ENCODE measurements at regions of chr3 and their contacts with region 1.

Region 1: GRCh38 chr3:10224784-10225665 is 23.2 kb upstream of the TATDN2 start:
- DNase-seq: peak; percentile 71
- ATAC-seq: peak; percentile 87
- H3K4me3 ChIP-seq: no peak overlapping the region
- H3K27ac ChIP-seq: no peak overlapping the region
- H3K4me1 ChIP-seq: peaks cover 29 to 42% of the 10 kb centered on the region in 2 experiments
- H3K27me3 ChIP-seq: no peaks in the 10 kb centered on the region
- CTCF ChIP-seq: peak; percentile 80 to 90 (median 89)
- POLR2A ChIP-seq: no peak
- RAD21 ChIP-seq: peak; percentile 98

Region 2: GRCh38 chr3:9278498-9278897 is 946.5 kb before region 1 on chr3:
- CTCF ChIA-PET with region 1: no interaction called
- POLR2A ChIA-PET with region 1: no interaction called
- RAD21 ChIA-PET with region 1: no interaction called
- intact Hi-C with region 1: no loop called
- DNase-seq: no peak
- ATAC-seq: no peak
- H3K4me3 ChIP-seq: no peak overlapping the region
- H3K27ac ChIP-seq: no peak overlapping the region
- H3K4me1 ChIP-seq: peaks cover 2 to 5% of the 10 kb centered on the region in 2 experiments; a peak in 3 of 4 replicates
- H3K27me3 ChIP-seq: no peaks in the 10 kb centered on the region
- CTCF ChIP-seq: no peak
- POLR2A ChIP-seq: no peak
- RAD21 ChIP-seq: no peak

Region 3: GRCh38 chr3:9715764-9716437 is 509.1 kb before region 1 on chr3:
- CTCF ChIA-PET with region 1: no interaction called
- POLR2A ChIA-PET with region 1: no interaction called
- RAD21 ChIA-PET with region 1: no interaction called
- intact Hi-C with region 1: loop called (anchors 5 kb)
- DNase-seq: peak; percentile 81
- ATAC-seq: peak; percentile 98
- H3K4me3 ChIP-seq: no peak overlapping the region
- H3K27ac ChIP-seq: peak overlapping the region; percentile 9; the same call in 1 of the 2 replicates
- H3K4me1 ChIP-seq: peaks cover 10 to 14% of the 10 kb centered on the region in 2 experiments
- H3K27me3 ChIP-seq: peaks cover 3% of the 10 kb centered on the region; the same call in 1 of the 2 replicates
- CTCF ChIP-seq: peak; percentile 89 to 94 (median 94)
- POLR2A ChIP-seq: no peak
- RAD21 ChIP-seq: peak; percentile 99

Region 4: DNA sequence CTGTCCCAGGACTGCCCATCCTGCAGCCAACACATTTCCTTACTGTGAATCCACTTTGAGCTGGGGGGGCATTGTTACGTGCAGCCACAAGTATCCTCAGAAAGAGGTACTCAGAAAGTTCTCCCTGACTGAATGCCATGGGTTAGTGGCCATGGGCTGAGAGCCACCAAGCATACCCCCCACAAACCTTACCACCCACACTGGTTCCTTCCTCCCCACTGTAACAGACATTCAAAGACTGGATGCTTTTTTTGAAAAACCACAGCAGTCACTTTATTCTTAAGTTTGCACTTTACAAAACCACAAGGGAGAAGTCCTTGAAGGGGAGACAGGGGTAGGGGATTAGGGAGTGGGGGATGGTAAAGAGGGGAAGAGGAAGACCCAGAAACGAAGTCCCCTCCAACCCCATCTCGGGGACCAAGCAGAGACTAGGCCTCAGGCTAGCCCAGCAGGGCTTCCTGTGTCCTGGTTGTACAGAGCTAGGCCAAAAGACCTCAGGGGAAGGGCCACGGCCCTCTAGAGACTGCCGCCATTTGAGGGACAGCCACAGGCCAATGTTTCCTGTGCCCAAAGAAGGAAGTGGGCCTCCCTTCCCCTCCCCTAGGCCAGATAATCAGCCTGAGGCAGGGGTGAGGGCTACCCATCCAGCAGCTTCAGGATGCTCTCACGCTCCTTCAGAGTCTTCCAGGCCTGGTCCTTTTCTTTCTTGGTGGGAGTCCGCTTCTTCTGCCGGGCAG is 445.1 kb before region 1 on chr3:
- CTCF ChIA-PET with region 1: no interaction called
- POLR2A ChIA-PET with region 1: no interaction called
- RAD21 ChIA-PET with region 1: no interaction called
- intact Hi-C with region 1: no loop called
- DNase-seq: no peak
- ATAC-seq: no peak
- H3K4me3 ChIP-seq: no peak overlapping the region
- H3K27ac ChIP-seq: no peak overlapping the region
- H3K4me1 ChIP-seq: peaks cover 0 to 11% of the 10 kb centered on the region in 2 experiments; a peak in 1 of 4 replicates
- H3K27me3 ChIP-seq: no peaks in the 10 kb centered on the region
- CTCF ChIP-seq: no peak
- POLR2A ChIP-seq: no peak
- RAD21 ChIP-seq: no peak

Region 5: DNA sequence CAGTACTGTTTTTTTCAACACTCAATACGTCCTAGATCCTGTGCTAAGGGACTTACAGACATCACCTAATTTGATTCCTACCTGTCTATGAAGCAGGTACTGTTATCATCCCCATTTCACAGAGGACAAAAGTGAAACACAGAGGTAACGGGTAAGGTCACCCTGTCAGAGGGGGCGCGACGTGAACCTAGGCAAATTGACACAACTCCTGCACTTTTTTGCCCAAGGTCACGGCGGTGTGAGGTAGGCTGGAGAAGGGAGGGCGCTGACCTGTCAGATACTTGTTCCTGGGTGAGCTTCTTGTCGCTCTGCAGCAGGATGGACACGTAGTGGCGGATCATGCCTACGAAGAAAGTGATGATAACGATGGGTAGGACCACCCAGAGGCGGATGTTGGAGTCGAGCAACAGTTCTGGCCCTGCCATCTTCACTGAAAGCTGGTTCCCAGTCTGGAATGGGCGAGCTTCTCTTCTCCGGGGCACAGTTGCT is 238.7 kb before region 1 on chr3:
- CTCF ChIA-PET with region 1: no interaction called
- POLR2A ChIA-PET with region 1: no interaction called
- RAD21 ChIA-PET with region 1: no interaction called
- intact Hi-C with region 1: loop called (anchors 10 kb)
- DNase-seq: no peak
- ATAC-seq: peak; percentile 57
- H3K4me3 ChIP-seq: peak overlapping the region; percentile 86 to 99
- H3K27ac ChIP-seq: peak overlapping the region; percentile 62; the same call in 1 of the 2 replicates
- H3K4me1 ChIP-seq: peaks cover 12 to 24% of the 10 kb centered on the region in 2 experiments
- H3K27me3 ChIP-seq: no peaks in the 10 kb centered on the region
- CTCF ChIP-seq: no peak
- POLR2A ChIP-seq: no peak
- RAD21 ChIP-seq: no peak

Region 6: GRCh38 chr3:10115326-10116137 is 109.5 kb before region 1 on chr3 and contains the start of gene BRK1:
- CTCF ChIA-PET with region 1: no interaction called
- POLR2A ChIA-PET with region 1: no interaction called
- RAD21 ChIA-PET with region 1: interaction called in 1 of 2 experiments, 3 read pairs
- intact Hi-C with region 1: loop called (anchors 10 kb)
- DNase-seq: peak; percentile 91
- ATAC-seq: peak; percentile 98
- H3K4me3 ChIP-seq: peak within 1 kb of the TSS; percentile 76 to 91
- H3K27ac ChIP-seq: peak within 1 kb of the TSS; percentile 43
- H3K4me1 ChIP-seq: peaks cover 8 to 17% of the 10 kb centered on the region in 2 experiments
- H3K27me3 ChIP-seq: no peaks in the 10 kb centered on the region
- CTCF ChIP-seq: no peak
- POLR2A ChIP-seq: peak; percentile 89
- RAD21 ChIP-seq: no peak
- total RNA-seq, gene BRK1: 93.4 TPM

Region 7: DNA sequence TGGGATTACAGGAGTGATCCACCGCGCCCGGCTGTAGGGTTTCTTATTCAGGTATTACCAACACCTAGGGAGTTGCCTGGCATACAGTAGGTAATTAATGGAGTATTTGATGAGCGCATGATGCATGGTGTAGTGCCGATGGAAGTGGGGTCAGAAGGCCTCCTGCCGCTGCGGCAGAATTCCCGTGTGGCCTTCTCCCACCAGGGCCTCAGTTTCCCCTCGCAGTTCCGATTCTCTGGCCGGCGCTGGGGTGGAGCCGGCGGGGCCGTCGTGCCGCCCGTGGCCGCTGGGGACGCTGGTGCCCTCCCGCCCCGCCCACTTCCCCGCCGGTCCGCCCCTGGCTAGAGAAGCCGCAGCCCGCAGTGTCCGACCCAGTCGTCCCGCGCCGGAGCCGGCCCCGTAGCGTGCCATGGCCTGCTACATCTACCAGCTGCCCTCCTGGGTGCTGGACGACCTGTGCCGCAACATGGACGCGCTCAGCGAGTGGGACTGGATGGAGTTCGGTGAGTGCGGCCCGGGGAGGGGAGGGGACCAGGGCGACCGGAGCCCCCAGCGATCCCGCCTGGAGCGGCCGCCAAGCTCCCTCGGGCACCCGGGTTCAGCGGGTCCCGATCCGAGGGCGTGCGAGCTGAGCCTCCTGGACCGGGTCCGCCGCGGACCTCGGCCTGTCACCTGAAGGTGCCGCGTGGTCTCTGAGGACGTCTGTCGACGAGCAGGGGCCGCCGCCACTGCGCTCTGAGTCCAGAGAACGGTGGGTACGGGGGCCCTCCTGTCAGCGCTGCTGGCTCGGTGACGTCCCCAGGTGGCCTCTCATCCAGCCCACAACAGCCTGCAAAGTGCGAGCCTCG is 60.3 kb before region 1 on chr3 and contains the start of gene IRAK2:
- CTCF ChIA-PET with region 1: no interaction called
- POLR2A ChIA-PET with region 1: no interaction called
- RAD21 ChIA-PET with region 1: interaction called in 1 of 2 experiments, 4 read pairs
- intact Hi-C with region 1: loop called (anchors 2 kb)
- DNase-seq: peak; percentile 22
- ATAC-seq: peak; percentile 94
- H3K4me3 ChIP-seq: peak within 1 kb of the TSS; percentile 68 to 86
- H3K27ac ChIP-seq: peak within 1 kb of the TSS; percentile 39; the same call in 1 of the 2 replicates
- H3K4me1 ChIP-seq: peaks cover 6 to 15% of the 10 kb centered on the region in 2 experiments; a peak in 1 of 4 replicates
- H3K27me3 ChIP-seq: no peaks in the 10 kb centered on the region
- CTCF ChIP-seq: peak in 2 of 3 experiments; percentile 54 to 68; a peak in 4 of 6 replicates
- POLR2A ChIP-seq: peak; percentile 50
- RAD21 ChIP-seq: peak; percentile 47
- total RNA-seq, gene IRAK2: 3.6 TPM

Measured in HCT116 (cell line).